Mucosa of descending colon (tissue), 3 donors: ENCODE measurements at regions of chr15 and their contacts with region 1.

Region 1: GRCh38 chr15:68775671-68776476 is 44.8 kb downstream of the ANP32A start:
- DNase-seq: peak; percentile 47 to 75 (median 49)
- ATAC-seq: peak; percentile 41
- H3K4me3 ChIP-seq: no peak overlapping the region
- H3K4me1 ChIP-seq: no peaks in the 10 kb centered on the region
- CTCF ChIP-seq: no peak

Region 2: GRCh38 chr15:68719672-68720071 is 56.2 kb before region 1 on chr15:
- intact Hi-C with region 1: loop called in 1 of 2 experiments (anchors 10 kb)
- DNase-seq: no peak
- ATAC-seq: no peak
- H3K4me3 ChIP-seq: no peak overlapping the region
- H3K4me1 ChIP-seq: no peaks in the 10 kb centered on the region
- CTCF ChIP-seq: no peak

Region 3: DNA sequence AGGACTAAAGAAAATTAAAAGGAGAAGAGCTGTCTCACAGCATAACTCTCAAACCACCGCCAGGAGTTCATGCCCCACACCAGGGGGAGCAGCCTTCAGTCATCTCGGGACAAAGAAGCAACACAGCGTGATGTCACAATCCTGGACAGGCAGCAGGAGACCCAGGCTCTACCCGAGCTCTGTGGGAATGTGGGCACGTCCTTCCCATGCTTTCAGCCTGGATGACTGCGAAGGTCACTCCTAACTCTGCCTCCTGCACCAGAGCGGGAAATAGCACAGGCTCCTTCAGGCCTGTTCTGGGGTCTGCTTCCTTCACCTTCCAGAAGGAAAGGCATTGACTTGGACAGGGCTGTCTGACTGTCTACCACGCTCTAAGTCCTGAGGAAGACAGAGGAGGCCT is 269.9 kb after region 1 on chr15:
- intact Hi-C with region 1: no loop called
- DNase-seq: no peak
- ATAC-seq: no peak
- H3K4me3 ChIP-seq: no peak overlapping the region
- H3K4me1 ChIP-seq: no peaks in the 10 kb centered on the region
- CTCF ChIP-seq: no peak